ENCODE measurements at regions of chr3 and their contacts with region 1.

Region 1: DNA sequence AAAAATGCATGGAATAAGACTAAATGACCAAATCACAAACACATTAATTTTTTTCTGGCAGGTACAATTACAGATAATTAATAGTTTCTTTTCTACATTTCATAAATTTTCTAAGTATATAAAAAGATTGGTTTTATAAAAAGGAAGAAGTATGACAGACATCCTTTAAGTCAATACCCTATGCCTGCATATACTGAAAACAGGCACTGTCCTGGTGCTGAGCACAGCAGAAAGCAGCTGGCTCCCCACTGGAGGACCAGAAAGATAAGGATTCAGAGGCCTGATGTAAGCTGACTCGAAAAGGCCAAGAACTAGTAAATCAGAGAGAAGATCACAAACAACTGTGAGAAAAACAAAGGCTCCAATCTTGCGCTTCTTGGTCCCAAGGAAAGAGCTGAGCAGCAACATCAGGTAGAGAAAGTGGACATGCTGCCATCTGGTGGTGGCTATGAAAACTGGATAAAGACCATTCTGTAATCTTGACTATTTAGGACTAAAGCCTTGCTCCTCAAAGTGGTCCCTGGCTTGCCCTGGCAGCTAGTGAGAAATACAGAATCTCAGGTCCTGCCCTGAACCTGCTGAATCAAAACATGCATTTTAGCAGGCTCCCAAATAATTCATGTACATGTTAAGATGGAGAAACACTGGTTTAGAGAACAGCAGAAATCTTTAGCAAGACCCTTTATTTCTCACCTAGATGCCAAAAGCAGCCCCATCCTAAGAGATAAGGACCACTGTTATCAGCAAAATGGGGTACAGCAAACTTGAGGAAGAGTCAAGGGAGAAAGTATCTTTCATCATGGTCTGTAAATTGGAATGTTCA is 76.0 kb downstream of the TRANK1 start:
- DNase-seq: peak in 8 of 9 donors; percentile 27 to 55 (median 46)
- ATAC-seq: peak; percentile 88
- H3K4me3 ChIP-seq: no peak overlapping the region
- H3K4me3 Mint-ChIP-seq: peak overlapping the region in 1 of 10 donors; percentile 53
- H3K27ac ChIP-seq: no peak overlapping the region
- H3K27ac Mint-ChIP-seq: peak overlapping the region in 5 of 9 donors; percentile 26 to 81 (median 63)
- H3K4me1 ChIP-seq: peaks cover 5 to 10% of the 10 kb centered on the region in 2 donors
- H3K4me1 Mint-ChIP-seq: peaks cover 12 to 43% (median 36%) of the 10 kb centered on the region in 7 donors
- H3K27me3 ChIP-seq: no peaks in the 10 kb centered on the region
- H3K27me3 Mint-ChIP-seq: peaks cover 0 to 4% (median 0%) of the 10 kb centered on the region in 5 donors

Region 2: GRCh38 chr3:35965908-35966307 is 902.9 kb before region 1 on chr3:
- CTCF ChIA-PET with region 1: no interaction called
- POLR2A ChIA-PET with region 1: no interaction called
- intact Hi-C with region 1: loop called in 1 of 2 experiments (anchors 5 kb)
- DNase-seq: peak in 2 of 9 donors; percentile 0 to 5
- ATAC-seq: no peak
- H3K4me3 ChIP-seq: no peak overlapping the region
- H3K4me3 Mint-ChIP-seq: no peak overlapping the region
- H3K27ac ChIP-seq: no peak overlapping the region
- H3K27ac Mint-ChIP-seq: no peak overlapping the region
- H3K4me1 ChIP-seq: no peaks in the 10 kb centered on the region
- H3K4me1 Mint-ChIP-seq: peaks cover 0 to 27% (median 5%) of the 10 kb centered on the region in 7 donors
- H3K27me3 ChIP-seq: no peaks in the 10 kb centered on the region
- H3K27me3 Mint-ChIP-seq: no peaks in the 10 kb centered on the region

Region 3: DNA sequence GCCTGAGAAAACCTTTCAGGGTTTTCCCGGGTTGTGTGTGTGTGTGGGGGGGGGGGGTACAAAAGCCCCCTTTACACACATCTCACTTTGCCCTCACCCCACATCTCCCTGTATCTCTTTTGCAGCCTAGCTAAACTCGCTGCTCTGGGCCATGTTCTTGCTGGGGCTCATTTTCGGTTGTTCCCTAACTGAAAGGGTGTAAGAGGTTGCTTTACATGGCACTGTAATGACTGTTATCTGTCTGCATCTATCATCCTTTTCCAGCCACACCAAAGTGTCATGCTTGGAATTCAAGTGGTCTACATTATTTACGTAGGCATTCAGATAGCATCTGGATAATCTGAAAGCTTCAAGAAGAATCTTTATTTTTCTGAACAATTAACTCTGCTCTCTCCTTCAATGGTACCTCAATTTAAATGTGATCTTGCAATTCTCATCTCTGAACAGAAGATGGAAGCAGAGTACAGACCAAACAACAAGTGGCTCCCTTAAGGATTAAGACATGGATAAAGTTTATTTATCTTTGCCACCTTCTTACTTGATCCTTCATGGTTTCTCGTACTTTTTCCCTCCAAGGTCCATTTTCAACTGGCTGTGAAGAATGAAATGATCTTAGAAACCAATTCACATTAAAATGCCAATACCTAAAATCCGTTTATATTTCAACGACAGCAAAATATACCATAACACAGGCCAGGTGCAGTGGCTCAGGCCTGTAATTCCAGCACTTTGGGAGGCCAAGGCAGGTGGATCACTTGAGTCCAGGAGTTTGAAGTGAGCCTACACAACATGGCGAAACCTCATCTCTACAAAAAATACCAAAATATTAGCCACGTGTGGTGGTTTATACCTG is 139.4 kb before region 1 on chr3:
- CTCF ChIA-PET with region 1: no interaction called
- POLR2A ChIA-PET with region 1: no interaction called
- intact Hi-C with region 1: loop called (anchors 1 kb)
- DNase-seq: peak in 4 of 9 donors; percentile 5 to 25 (median 18)
- ATAC-seq: peak; percentile 56
- H3K4me3 ChIP-seq: no peak overlapping the region
- H3K4me3 Mint-ChIP-seq: no peak overlapping the region
- H3K27ac ChIP-seq: no peak overlapping the region
- H3K27ac Mint-ChIP-seq: no peak overlapping the region
- H3K4me1 ChIP-seq: no peaks in the 10 kb centered on the region
- H3K4me1 Mint-ChIP-seq: no peaks in the 10 kb centered on the region
- H3K27me3 ChIP-seq: no peaks in the 10 kb centered on the region
- H3K27me3 Mint-ChIP-seq: peaks cover 0 to 12% (median 7%) of the 10 kb centered on the region in 5 donors

Region 4: GRCh38 chr3:36792342-36792741 is 76.5 kb before region 1 on chr3:
- CTCF ChIA-PET with region 1: no interaction called
- POLR2A ChIA-PET with region 1: no interaction called
- intact Hi-C with region 1: loop called (anchors 1 kb)
- DNase-seq: peak in 1 of 9 donors; percentile 12
- ATAC-seq: no peak
- H3K4me3 ChIP-seq: no peak overlapping the region
- H3K4me3 Mint-ChIP-seq: no peak overlapping the region
- H3K27ac ChIP-seq: no peak overlapping the region
- H3K27ac Mint-ChIP-seq: no peak overlapping the region
- H3K4me1 ChIP-seq: no peaks in the 10 kb centered on the region
- H3K4me1 Mint-ChIP-seq: peaks cover 0 to 2% (median 0%) of the 10 kb centered on the region in 7 donors
- H3K27me3 ChIP-seq: no peaks in the 10 kb centered on the region
- H3K27me3 Mint-ChIP-seq: peaks cover 5 to 32% (median 12%) of the 10 kb centered on the region in 5 donors

Region 5: GRCh38 chr3:36837089-36837488 is 31.7 kb before region 1 on chr3:
- CTCF ChIA-PET with region 1: interaction called, 3 read pairs
- POLR2A ChIA-PET with region 1: interaction called, 4 read pairs
- intact Hi-C with region 1: loop called in 1 of 2 experiments (anchors 2 kb)
- DNase-seq: no peak
- ATAC-seq: no peak
- H3K4me3 ChIP-seq: no peak overlapping the region
- H3K4me3 Mint-ChIP-seq: no peak overlapping the region
- H3K27ac ChIP-seq: no peak overlapping the region
- H3K27ac Mint-ChIP-seq: peak overlapping the region in 5 of 9 donors; percentile 15 to 58 (median 39)
- H3K4me1 ChIP-seq: no peaks in the 10 kb centered on the region
- H3K4me1 Mint-ChIP-seq: peaks cover 2 to 12% (median 7%) of the 10 kb centered on the region in 7 donors
- H3K27me3 ChIP-seq: no peaks in the 10 kb centered on the region
- H3K27me3 Mint-ChIP-seq: no peaks in the 10 kb centered on the region

Measured in naive thymus-derived CD4-positive, alpha-beta T cell (primary cell).